ENCODE measurements at regions of chr9 and their contacts with region 1.

Region 1: DNA sequence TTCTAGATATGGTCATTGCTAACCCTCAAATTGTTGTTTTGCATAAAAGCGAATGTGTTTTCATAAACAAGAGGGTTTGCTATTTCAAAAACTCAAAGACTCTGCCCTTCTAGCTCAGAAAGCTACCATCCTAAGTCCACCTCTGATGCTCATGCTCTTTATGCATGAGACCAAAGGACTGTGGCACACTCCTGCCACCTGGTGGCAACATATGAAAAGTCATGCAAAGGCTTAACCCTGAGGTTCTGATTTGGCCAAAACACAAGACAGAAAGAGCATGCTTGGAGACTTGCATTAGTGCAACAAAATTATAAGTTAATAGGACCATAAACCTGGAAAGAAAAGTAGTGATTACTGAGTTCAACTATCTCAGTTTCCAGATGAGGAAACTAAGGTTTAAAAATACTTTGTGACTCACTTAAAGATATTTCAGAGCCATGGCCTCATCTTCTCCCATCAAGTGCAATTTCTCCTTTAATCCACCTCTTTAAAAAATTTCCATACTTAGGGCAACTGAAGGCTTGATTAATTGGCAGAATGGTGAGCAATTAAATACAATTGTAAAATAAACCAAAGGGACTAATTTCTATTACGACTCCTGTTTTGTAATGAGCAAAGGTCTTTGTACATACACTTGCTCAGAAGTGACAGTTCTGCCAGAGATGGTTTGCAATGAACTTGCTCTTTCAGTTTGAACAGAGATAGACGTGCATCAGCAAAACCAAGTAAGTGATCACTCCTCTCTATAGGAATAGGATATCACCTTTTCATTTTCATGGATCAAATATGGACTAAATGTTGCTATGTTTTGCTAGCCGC is 110.7 kb upstream of the RAD23B start:
- DNase-seq: peak; percentile 82
- H3K4me3 Mint-ChIP-seq: no peak overlapping the region
- H3K27ac Mint-ChIP-seq: no peak overlapping the region
- H3K4me1 Mint-ChIP-seq: peaks cover 15% of the 10 kb centered on the region
- H3K27me3 Mint-ChIP-seq: no peaks in the 10 kb centered on the region

Region 2: GRCh38 chr9:105842023-105842644 is 1330.2 kb before region 1 on chr9:
- CTCF ChIA-PET with region 1: no interaction called
- intact Hi-C with region 1: loop called (anchors 1 kb)
- DNase-seq: peak; percentile 61
- H3K4me3 Mint-ChIP-seq: no peak overlapping the region
- H3K27ac Mint-ChIP-seq: no peak overlapping the region
- H3K4me1 Mint-ChIP-seq: no peaks in the 10 kb centered on the region
- H3K27me3 Mint-ChIP-seq: no peaks in the 10 kb centered on the region

Region 3: GRCh38 chr9:105901514-105902109 is 1270.8 kb before region 1 on chr9:
- CTCF ChIA-PET with region 1: no interaction called
- intact Hi-C with region 1: loop called (anchors 2 kb)
- DNase-seq: no peak
- H3K4me3 Mint-ChIP-seq: no peak overlapping the region
- H3K27ac Mint-ChIP-seq: no peak overlapping the region
- H3K4me1 Mint-ChIP-seq: no peaks in the 10 kb centered on the region
- H3K27me3 Mint-ChIP-seq: no peaks in the 10 kb centered on the region

Region 4: DNA sequence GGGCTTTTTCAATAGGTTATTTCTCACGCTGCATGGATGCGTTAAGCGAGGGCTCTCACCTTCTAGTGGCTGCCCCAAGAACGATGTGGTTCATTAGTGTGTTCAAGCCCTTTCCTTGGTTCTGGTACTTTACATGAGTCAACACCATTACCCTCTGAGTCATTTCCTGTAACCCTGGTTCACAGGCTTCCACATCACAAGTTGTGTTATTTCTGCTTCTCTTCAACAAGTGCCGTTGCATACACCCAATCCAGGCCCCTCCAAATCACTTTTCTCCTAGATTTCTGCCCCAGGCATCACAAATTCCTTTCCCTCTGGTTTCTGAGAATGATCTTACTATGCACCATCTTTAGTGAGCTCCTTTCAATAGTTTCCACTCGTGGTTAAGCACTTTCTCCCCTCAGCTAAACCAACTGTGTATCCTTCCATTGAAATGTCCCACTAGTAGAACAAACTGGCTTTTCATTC is 41.2 kb after region 1 on chr9:
- CTCF ChIA-PET with region 1: no interaction called
- intact Hi-C with region 1: loop called (anchors 1 kb)
- DNase-seq: peak; percentile 64
- H3K4me3 Mint-ChIP-seq: no peak overlapping the region
- H3K27ac Mint-ChIP-seq: peak overlapping the region; percentile 48
- H3K4me1 Mint-ChIP-seq: peaks cover 10% of the 10 kb centered on the region
- H3K27me3 Mint-ChIP-seq: peaks cover 9% of the 10 kb centered on the region

Region 5: GRCh38 chr9:107340920-107341632 is 168.7 kb after region 1 on chr9:
- CTCF ChIA-PET with region 1: interaction called, 5 read pairs
- intact Hi-C with region 1: loop called (anchors 1 kb)
- DNase-seq: peak; percentile 92
- H3K4me3 Mint-ChIP-seq: no peak overlapping the region
- H3K27ac Mint-ChIP-seq: no peak overlapping the region
- H3K4me1 Mint-ChIP-seq: peaks cover 9% of the 10 kb centered on the region
- H3K27me3 Mint-ChIP-seq: peaks cover 2% of the 10 kb centered on the region

Measured in activated naive CD4-positive, alpha-beta T cell treated with anti-CD3 and anti-CD28 coated beads for 36 hours (primary cell).